ENCODE measurements at regions of chr13 and their contacts with region 1.

Region 1: GRCh38 chr13:114110091-114110829 is 22.2 kb downstream of the RASA3 start:
- DNase-seq: peak; percentile 54 to 88 (median 84)
- ATAC-seq: peak; percentile 86
- H3K4me3 ChIP-seq: peak overlapping the region; percentile 59
- H3K4me3 Mint-ChIP-seq: peak overlapping the region; percentile 83 to 95 (median 87)
- H3K27ac ChIP-seq: peak overlapping the region; percentile 73
- H3K27ac Mint-ChIP-seq: peak overlapping the region; percentile 90 to 98 (median 96)
- H3K4me1 ChIP-seq: peaks cover 70 to 93% of the 10 kb centered on the region in 2 donors
- H3K4me1 Mint-ChIP-seq: peaks cover 54 to 90% (median 74%) of the 10 kb centered on the region in 7 donors
- H3K27me3 ChIP-seq: no peaks in the 10 kb centered on the region
- H3K27me3 Mint-ChIP-seq: no peaks in the 10 kb centered on the region

Region 2: DNA sequence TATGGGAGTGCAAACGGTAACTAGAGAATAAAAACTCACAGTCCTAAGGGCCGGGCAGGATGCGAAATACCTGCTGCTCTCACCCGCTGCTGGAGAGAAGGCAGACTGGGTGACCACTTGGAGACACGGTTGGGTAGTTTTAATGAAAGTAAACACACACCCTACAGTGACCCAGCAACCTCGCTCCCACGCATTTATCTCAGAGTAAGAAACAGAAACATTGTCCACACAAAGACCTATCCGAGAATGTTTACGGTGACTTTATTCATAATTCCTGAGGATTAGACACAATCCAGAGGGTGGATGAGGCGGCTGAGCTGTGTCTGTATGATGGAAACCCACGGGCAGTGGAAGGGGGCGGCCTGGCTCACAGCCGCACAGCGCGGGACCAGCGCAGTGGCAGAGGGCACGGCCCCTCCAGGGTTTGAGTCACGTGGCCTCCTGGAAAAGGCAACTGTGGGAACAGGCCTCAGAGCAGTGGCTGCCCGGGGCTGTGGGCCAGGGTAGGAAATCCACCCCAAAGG is 62.8 kb before region 1 on chr13:
- CTCF ChIA-PET with region 1: no interaction called
- POLR2A ChIA-PET with region 1: no interaction called
- intact Hi-C with region 1: loop called in 1 of 2 experiments (anchors 5 kb)
- DNase-seq: no peak
- ATAC-seq: no peak
- H3K4me3 ChIP-seq: no peak overlapping the region
- H3K4me3 Mint-ChIP-seq: peak overlapping the region in 6 of 10 donors; percentile 12 to 75 (median 36)
- H3K27ac ChIP-seq: peak overlapping the region; percentile 10
- H3K27ac Mint-ChIP-seq: peak overlapping the region; percentile 18 to 95 (median 55)
- H3K4me1 ChIP-seq: peaks cover 22 to 34% of the 10 kb centered on the region in 2 donors
- H3K4me1 Mint-ChIP-seq: peaks cover 52 to 79% (median 69%) of the 10 kb centered on the region in 7 donors
- H3K27me3 ChIP-seq: no peaks in the 10 kb centered on the region
- H3K27me3 Mint-ChIP-seq: no peaks in the 10 kb centered on the region

Region 3: DNA sequence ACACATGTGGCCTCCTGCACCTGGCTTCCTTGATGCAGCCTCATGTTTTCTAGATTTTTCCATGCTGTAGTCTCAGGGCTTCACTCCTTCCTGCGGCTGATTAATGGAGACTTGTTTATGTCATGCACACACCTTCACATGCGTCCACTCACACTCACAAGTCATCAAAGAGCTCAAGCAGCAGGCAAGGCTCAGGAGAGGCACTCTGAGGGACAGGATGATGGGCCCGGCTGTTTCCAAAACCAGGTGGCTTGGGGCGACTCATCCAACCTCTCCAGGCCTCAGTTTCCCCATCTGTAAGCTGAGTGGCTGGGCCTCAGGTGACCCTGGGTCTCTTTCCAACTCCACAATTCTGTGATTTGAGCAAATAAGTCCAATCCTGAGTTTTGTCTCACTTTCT is 14.8 kb before region 1 on chr13:
- CTCF ChIA-PET with region 1: interaction called, 4 read pairs
- POLR2A ChIA-PET with region 1: interaction called, 5 read pairs
- intact Hi-C with region 1: loop called in 1 of 2 experiments (anchors 1 kb)
- DNase-seq: no peak
- ATAC-seq: no peak
- H3K4me3 ChIP-seq: no peak overlapping the region
- H3K4me3 Mint-ChIP-seq: peak overlapping the region in 9 of 10 donors; percentile 36 to 79 (median 53)
- H3K27ac ChIP-seq: peak overlapping the region; percentile 50
- H3K27ac Mint-ChIP-seq: peak overlapping the region in 8 of 9 donors; percentile 24 to 96 (median 80)
- H3K4me1 ChIP-seq: peaks cover 47 to 52% of the 10 kb centered on the region in 2 donors
- H3K4me1 Mint-ChIP-seq: peaks cover 35 to 88% (median 75%) of the 10 kb centered on the region in 7 donors
- H3K27me3 ChIP-seq: no peaks in the 10 kb centered on the region
- H3K27me3 Mint-ChIP-seq: no peaks in the 10 kb centered on the region

Region 4: GRCh38 chr13:114132419-114133121 is 22.3 kb after region 1 on chr13 and contains the start of gene RASA3:
- CTCF ChIA-PET with region 1: interaction called, 8 read pairs
- POLR2A ChIA-PET with region 1: interaction called, 137 read pairs
- intact Hi-C with region 1: loop called (anchors 1 kb)
- DNase-seq: peak in 8 of 9 donors; percentile 52 to 75 (median 58)
- ATAC-seq: peak; percentile 69
- H3K4me3 ChIP-seq: peak within 1 kb of the TSS; percentile 90
- H3K4me3 Mint-ChIP-seq: peak within 1 kb of the TSS; percentile 96 to 100 (median 100)
- H3K27ac ChIP-seq: peak within 1 kb of the TSS; percentile 85
- H3K27ac Mint-ChIP-seq: peak within 1 kb of the TSS; percentile 82 to 100 (median 99)
- H3K4me1 ChIP-seq: peaks cover 32 to 49% of the 10 kb centered on the region in 2 donors
- H3K4me1 Mint-ChIP-seq: peaks cover 36 to 74% (median 56%) of the 10 kb centered on the region in 7 donors
- H3K27me3 ChIP-seq: no peaks in the 10 kb centered on the region
- H3K27me3 Mint-ChIP-seq: peaks cover 0 to 4% (median 0%) of the 10 kb centered on the region in 5 donors
- total RNA-seq, gene RASA3: 110 to 227 (median 199) TPM

Region 5: GRCh38 chr13:114226699-114227323 is 116.6 kb after region 1 on chr13:
- CTCF ChIA-PET with region 1: interaction called, 15 read pairs
- POLR2A ChIA-PET with region 1: interaction called, 10 read pairs
- intact Hi-C with region 1: loop called (anchors 1 to 2 kb)
- DNase-seq: peak; percentile 67 to 82 (median 73)
- ATAC-seq: peak; percentile 92
- H3K4me3 ChIP-seq: no peak overlapping the region
- H3K4me3 Mint-ChIP-seq: peak overlapping the region; percentile 35 to 74 (median 54)
- H3K27ac ChIP-seq: peak overlapping the region; percentile 47
- H3K27ac Mint-ChIP-seq: peak overlapping the region in 8 of 9 donors; percentile 84 to 95 (median 91)
- H3K4me1 ChIP-seq: peaks cover 17 to 40% of the 10 kb centered on the region in 2 donors
- H3K4me1 Mint-ChIP-seq: peaks cover 37 to 50% (median 43%) of the 10 kb centered on the region in 7 donors
- H3K27me3 ChIP-seq: no peaks in the 10 kb centered on the region
- H3K27me3 Mint-ChIP-seq: peaks cover 0 to 34% (median 4%) of the 10 kb centered on the region in 5 donors